Panc1 (cell line): ENCODE measurements at regions of chr3 and their contacts with region 1.

Region 1: GRCh38 chr3:9932843-9933560 is 632 bp upstream of the CRELD1 start:
- DNase-seq: no peak
- ATAC-seq: peak; percentile 87
- H3K4me3 ChIP-seq: peak overlapping the region; percentile 66 to 72
- H3K27ac ChIP-seq: peak overlapping the region; percentile 65; the same call in 1 of the 2 replicates
- H3K4me1 ChIP-seq: 0 out of 2 replicates have a peak, but pooled peaks cover 4% of the 10 kb centered on the region
- H3K27me3 ChIP-seq: no peaks in the 10 kb centered on the region
- CTCF ChIP-seq: peak; percentile 88

Region 2: DNA sequence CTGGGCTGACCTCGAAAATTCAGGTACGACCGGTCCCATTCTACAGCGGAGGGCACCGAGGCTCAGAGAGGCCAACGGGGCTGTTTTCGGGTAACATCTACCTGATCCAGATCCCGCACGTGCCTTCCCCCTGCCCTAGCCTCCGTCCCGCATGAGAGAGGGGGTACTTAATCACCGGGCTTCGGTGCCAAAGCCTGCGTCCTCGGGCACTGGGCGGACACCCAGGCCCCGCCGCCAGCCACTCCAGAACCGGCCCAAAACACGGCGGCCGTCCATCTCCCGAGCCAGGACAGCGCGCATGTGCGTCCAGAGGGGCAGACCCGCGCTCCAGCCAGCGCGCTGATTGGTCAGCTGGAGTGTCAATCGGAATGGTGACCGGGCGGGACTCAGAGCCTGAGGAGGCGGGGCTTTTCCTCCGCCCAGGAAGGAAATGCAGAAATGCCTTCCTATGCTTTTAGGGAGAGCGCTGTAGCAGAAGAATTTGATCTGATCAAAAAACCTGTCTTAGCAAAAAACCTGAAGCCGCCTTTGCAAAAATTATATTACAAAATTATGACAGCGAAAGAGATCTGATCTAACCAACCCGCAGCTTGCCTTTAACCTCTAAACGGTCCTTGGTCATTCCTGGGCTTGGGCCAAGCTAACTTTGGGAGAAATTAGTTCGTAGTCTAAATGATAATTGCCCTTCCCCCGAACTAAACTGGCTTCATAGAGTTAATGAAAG is 89.1 kb before region 1 on chr3 and contains the start of gene RPUSD3:
- CTCF ChIA-PET with region 1: interaction called, 6 read pairs
- POLR2A ChIA-PET with region 1: no interaction called
- in situ Hi-C with region 1: no loop called
- intact Hi-C with region 1: loop called (anchors 10 kb)
- DNase-seq: peak; percentile 69
- ATAC-seq: peak; percentile 99
- H3K4me3 ChIP-seq: peak within 1 kb of the TSS; percentile 68 to 81
- H3K27ac ChIP-seq: peak within 1 kb of the TSS; percentile 87
- H3K4me1 ChIP-seq: no peaks in the 10 kb centered on the region
- H3K27me3 ChIP-seq: no peaks in the 10 kb centered on the region
- CTCF ChIP-seq: no peak
- total RNA-seq, gene RPUSD3: 40.4 TPM

Region 3: DNA sequence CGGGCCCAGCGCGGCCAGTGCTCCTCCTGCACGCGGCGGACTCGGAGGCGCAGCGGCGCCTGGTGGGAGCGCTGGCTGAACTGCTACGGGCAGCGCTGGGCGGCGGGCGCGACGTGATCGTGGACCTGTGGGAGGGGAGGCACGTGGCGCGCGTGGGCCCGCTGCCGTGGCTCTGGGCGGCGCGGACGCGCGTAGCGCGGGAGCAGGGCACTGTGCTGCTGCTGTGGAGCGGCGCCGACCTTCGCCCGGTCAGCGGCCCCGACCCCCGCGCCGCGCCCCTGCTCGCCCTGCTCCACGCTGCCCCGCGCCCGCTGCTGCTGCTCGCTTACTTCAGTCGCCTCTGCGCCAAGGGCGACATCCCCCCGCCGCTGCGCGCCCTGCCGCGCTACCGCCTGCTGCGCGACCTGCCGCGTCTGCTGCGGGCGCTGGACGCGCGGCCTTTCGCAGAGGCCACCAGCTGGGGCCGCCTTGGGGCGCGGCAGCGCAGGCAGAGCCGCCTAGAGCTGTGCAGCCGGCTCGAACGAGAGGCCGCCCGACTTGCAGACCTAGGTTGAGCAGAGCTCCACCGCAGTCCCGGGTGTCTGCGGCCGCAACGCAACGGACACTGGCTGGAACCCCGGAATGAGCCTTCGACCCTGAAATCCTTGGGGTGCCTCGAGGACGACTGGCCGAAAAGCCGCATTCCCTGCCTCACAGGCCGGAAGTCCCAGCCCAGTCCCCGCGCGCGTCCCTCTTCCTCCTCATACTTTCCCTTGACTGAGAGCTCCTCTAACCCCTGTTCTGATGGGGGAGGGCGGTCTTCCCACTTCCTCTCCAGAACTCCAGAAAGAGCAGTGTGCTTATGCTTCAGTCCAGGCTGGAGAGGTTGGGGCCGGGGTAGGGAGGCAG is 17.5 kb before region 1 on chr3:
- CTCF ChIA-PET with region 1: interaction called, 11 read pairs
- POLR2A ChIA-PET with region 1: interaction called, 3 read pairs
- in situ Hi-C with region 1: no loop called
- intact Hi-C with region 1: no loop called
- DNase-seq: no peak
- ATAC-seq: peak; percentile 74
- H3K4me3 ChIP-seq: peak overlapping the region; percentile 43 to 50
- H3K27ac ChIP-seq: peak overlapping the region; percentile 85
- H3K4me1 ChIP-seq: peaks cover 25% of the 10 kb centered on the region
- H3K27me3 ChIP-seq: no peaks in the 10 kb centered on the region
- CTCF ChIP-seq: no peak; the same call in 1 of the 2 replicates

Region 4: GRCh38 chr3:9946112-9947024 is 13.4 kb after region 1 on chr3:
- CTCF ChIA-PET with region 1: interaction called, 16 read pairs
- POLR2A ChIA-PET with region 1: no interaction called
- in situ Hi-C with region 1: no loop called
- intact Hi-C with region 1: no loop called
- DNase-seq: no peak
- ATAC-seq: peak; percentile 90
- H3K4me3 ChIP-seq: peak overlapping the region; percentile 58 to 70
- H3K27ac ChIP-seq: peak overlapping the region; percentile 83
- H3K4me1 ChIP-seq: no peaks in the 10 kb centered on the region
- H3K27me3 ChIP-seq: no peaks in the 10 kb centered on the region
- CTCF ChIP-seq: peak; percentile 88

Region 5: GRCh38 chr3:9976721-9977709 is 44.0 kb after region 1 on chr3:
- CTCF ChIA-PET with region 1: no interaction called
- POLR2A ChIA-PET with region 1: interaction called, 13 read pairs
- in situ Hi-C with region 1: no loop called
- intact Hi-C with region 1: no loop called
- DNase-seq: peak; percentile 87
- ATAC-seq: peak; percentile 99
- H3K4me3 ChIP-seq: no peak overlapping the region
- H3K27ac ChIP-seq: peak overlapping the region; percentile 30; the same call in 1 of the 2 replicates
- H3K4me1 ChIP-seq: peaks cover 14% of the 10 kb centered on the region
- H3K27me3 ChIP-seq: no peaks in the 10 kb centered on the region
- CTCF ChIP-seq: no peak